ENCODE measurements at regions of chr4 and their contacts with region 1.

Region 1: DNA sequence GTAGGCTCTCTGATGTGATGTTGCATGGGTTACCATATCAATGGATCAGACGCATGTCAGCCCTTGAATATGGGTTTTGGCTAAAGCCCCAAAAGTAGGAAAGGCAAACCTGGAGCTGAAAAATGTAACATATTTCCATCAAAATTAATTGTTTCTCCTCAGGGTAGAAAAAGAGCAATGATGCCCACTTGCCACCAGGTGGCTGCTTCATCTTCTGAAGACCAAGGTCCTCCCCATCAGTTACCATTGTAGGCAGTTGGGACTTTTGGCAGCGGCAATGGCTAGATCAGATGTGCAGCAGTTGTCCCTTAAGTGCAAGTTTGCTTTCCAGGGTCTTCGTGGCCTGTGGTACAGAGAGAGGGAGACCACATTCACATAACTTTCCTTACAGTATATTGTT is 118.2 kb downstream of the NAF1 start:
- DNase-seq: peak in 1 of 2 experiments; percentile 15
- H3K4me3 ChIP-seq: no peak overlapping the region
- H3K27ac ChIP-seq: no peak overlapping the region
- H3K4me1 ChIP-seq: no peaks in the 10 kb centered on the region
- H3K27me3 ChIP-seq: no peaks in the 10 kb centered on the region
- CTCF ChIP-seq: peak; percentile 65

Region 2: DNA sequence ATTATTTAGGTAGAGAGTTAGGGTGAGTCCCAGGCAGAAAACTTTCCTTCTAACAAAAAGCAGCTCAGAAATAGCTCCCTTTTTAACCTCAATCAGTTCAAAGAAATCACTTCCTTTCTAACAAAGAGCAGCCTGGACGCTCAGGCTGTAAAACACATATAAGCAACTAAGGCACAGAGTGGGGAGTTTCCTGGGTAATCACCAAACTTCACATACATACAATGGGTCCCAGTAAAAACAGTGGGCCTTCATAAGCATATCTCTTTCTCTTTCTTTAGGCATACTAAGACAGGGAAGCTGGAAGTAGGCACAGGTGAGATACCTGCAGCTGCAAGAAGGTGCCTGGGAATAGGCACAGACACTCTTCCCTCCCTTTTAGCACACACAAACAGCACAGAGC is 123.1 kb after region 1 on chr4:
- CTCF ChIA-PET with region 1: no interaction called
- POLR2A ChIA-PET with region 1: no interaction called
- intact Hi-C with region 1: loop called (anchors 10 kb)
- DNase-seq: no peak
- H3K4me3 ChIP-seq: no peak overlapping the region
- H3K27ac ChIP-seq: no peak overlapping the region
- H3K4me1 ChIP-seq: peaks cover 7% of the 10 kb centered on the region; the same call in 1 of the 2 replicates
- H3K27me3 ChIP-seq: no peaks in the 10 kb centered on the region
- CTCF ChIP-seq: no peak

Region 3: GRCh38 chr4:163217505-163217904 is 169.1 kb after region 1 on chr4:
- CTCF ChIA-PET with region 1: no interaction called
- POLR2A ChIA-PET with region 1: no interaction called
- intact Hi-C with region 1: no loop called
- DNase-seq: no peak
- H3K4me3 ChIP-seq: no peak overlapping the region
- H3K27ac ChIP-seq: no peak overlapping the region
- H3K4me1 ChIP-seq: no peaks in the 10 kb centered on the region
- H3K27me3 ChIP-seq: no peaks in the 10 kb centered on the region
- CTCF ChIP-seq: no peak

Measured in PC-9 (cell line).